H1 (cell line): ENCODE measurements at regions of chr2 and their contacts with region 1.

Region 1: GRCh38 chr2:3461801-3462492 is 57.4 kb downstream of the ADI1 start:
- DNase-seq: no peak
- H3K4me3 ChIP-seq: no peak overlapping the region; a peak in 1 of 8 replicates
- H3K27ac ChIP-seq: no peak overlapping the region
- H3K4me1 ChIP-seq: peaks cover 5 to 10% (median 9%) of the 10 kb centered on the region in 4 experiments
- H3K27me3 ChIP-seq: no peaks in the 10 kb centered on the region
- CTCF ChIP-seq: peak; percentile 4 to 74 (median 45)
- EP300 ChIP-seq: no peak
- POLR2A ChIP-seq: no peak
- RAD21 ChIP-seq: peak; percentile 51 to 54

Region 2: DNA sequence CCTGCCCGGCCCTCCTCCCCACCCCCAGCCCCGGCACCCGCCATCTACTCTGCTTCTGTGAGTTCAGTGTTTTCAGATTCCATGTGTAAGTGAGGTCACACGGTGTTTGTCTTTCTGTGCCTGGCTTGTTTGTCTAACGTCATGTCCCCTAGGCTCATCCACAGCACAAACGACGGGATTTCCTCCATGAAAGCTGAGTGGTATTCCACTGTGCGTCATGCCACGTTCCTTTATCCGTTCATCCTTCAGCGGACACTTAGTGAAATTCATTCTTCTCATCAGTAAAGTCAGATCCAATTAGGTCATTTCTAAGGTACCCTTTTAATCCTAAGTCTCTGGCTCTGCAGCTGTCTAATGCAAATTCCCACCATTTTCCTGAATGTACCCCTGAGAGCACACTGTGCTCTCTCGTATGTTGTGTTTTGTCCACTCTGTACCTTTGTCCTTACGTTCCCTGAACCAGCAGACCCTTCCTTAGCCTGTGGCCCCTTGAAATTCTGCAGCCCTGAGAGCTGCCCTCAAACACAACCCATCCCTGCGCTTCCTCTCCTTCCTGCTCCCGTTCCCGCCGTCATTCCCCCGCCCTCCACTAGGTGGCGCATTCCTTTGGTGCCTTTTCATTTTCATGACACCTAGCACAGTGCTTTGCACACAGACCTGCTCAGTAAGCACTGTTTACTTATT is 38.3 kb before region 1 on chr2:
- CTCF ChIA-PET with region 1: interaction called, 123 read pairs
- POLR2A ChIA-PET with region 1: no interaction called
- DNase-seq: peak; percentile 38 to 98
- H3K4me3 ChIP-seq: no peak overlapping the region
- H3K27ac ChIP-seq: no peak overlapping the region
- H3K4me1 ChIP-seq: no peaks in the 10 kb centered on the region
- H3K27me3 ChIP-seq: no peaks in the 10 kb centered on the region
- CTCF ChIP-seq: peak; percentile 74 to 99 (median 98)
- EP300 ChIP-seq: no peak
- POLR2A ChIP-seq: no peak
- RAD21 ChIP-seq: peak; percentile 52 to 65; a peak in 3 of 4 replicates

Region 3: GRCh38 chr2:3443506-3444073 is 18.4 kb before region 1 on chr2:
- CTCF ChIA-PET with region 1: interaction called, 33 read pairs
- POLR2A ChIA-PET with region 1: interaction called, 3 read pairs
- DNase-seq: peak in 1 of 2 experiments; percentile 50
- H3K4me3 ChIP-seq: no peak overlapping the region
- H3K27ac ChIP-seq: no peak overlapping the region
- H3K4me1 ChIP-seq: peaks cover 0 to 3% (median 0%) of the 10 kb centered on the region in 4 experiments; a peak in 1 of 7 replicates
- H3K27me3 ChIP-seq: no peaks in the 10 kb centered on the region
- CTCF ChIP-seq: peak; percentile 79 to 98 (median 88)
- EP300 ChIP-seq: no peak
- POLR2A ChIP-seq: no peak
- RAD21 ChIP-seq: peak; percentile 49 to 61

Region 4: GRCh38 chr2:3483227-3483985 is 21.5 kb after region 1 on chr2:
- CTCF ChIA-PET with region 1: interaction called, 152 read pairs
- POLR2A ChIA-PET with region 1: interaction called, 4 read pairs
- DNase-seq: peak; percentile 83 to 93
- H3K4me3 ChIP-seq: peak overlapping the region in 1 of 4 experiments; percentile 36; a peak in 3 of 8 replicates
- H3K27ac ChIP-seq: no peak overlapping the region
- H3K4me1 ChIP-seq: no peaks in the 10 kb centered on the region; a peak in 1 of 7 replicates
- H3K27me3 ChIP-seq: no peaks in the 10 kb centered on the region
- CTCF ChIP-seq: no peak
- EP300 ChIP-seq: no peak
- POLR2A ChIP-seq: no peak
- RAD21 ChIP-seq: no peak

Region 5: DNA sequence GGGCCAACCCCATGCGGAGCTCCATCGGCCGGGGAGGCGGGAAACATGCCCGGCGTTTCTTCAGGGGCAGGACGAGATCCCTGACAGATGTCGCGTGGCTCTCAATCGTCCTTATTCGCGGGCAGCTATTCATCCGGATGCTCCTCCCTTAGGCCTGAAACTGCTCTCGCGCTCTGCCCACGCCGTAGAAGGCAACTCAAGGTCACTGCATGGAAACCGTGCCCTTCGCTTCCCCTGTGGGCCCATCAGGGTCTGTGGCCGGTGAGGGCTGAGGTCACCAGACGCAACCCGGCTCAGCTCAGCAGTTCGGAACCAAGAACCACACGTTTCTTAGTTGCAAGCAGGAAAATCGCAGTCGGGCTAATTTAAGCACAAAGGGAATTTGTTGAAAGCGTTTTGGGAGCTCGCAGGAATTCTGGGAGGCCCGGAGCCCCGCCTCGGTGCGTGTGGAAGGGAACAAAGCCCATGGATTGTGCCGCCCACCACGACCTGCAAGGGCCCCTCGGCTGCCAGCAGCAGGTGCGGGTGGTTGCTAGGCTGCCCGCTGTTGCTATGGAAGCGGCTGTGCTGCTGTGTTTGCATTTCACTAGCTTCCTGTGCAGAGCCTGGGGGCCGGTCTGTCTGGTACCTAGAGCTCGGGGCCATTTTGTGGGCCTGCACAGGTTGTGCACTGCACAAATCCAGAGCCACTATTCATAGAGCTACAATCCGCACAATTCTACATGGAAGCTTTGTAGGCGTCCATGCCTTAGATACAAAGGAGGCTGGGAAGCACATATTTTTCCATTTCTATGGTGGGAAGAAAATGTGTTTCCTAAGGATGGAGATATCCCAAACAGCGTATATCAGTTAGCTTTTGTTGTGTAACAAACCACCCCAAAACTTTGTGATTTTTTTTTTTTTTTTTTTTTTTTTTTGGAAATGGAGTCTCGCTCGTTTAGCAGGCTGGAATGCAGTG is 190.0 kb after region 1 on chr2:
- CTCF ChIA-PET with region 1: interaction called, 10 read pairs
- POLR2A ChIA-PET with region 1: no interaction called
- DNase-seq: peak; percentile 70 to 88
- H3K4me3 ChIP-seq: peak overlapping the region; percentile 13 to 67 (median 60); a peak in 7 of 8 replicates
- H3K27ac ChIP-seq: peak overlapping the region; percentile 85
- H3K4me1 ChIP-seq: peaks cover 0 to 14% (median 11%) of the 10 kb centered on the region in 4 experiments; a peak in 6 of 7 replicates
- H3K27me3 ChIP-seq: peaks cover 0 to 2% (median 0%) of the 10 kb centered on the region in 4 experiments; a peak in 1 of 7 replicates
- CTCF ChIP-seq: no peak
- EP300 ChIP-seq: no peak
- POLR2A ChIP-seq: peak in 1 of 2 experiments; percentile 74; a peak in 1 of 3 replicates
- RAD21 ChIP-seq: no peak